CD4-positive, alpha-beta memory T cell (primary cell): ENCODE measurements at regions of chr7 and their contacts with region 1.

Region 1: GRCh38 chr7:139124084-139124914 is 14.8 kb upstream of the ZC3HAV1 start:
- DNase-seq: no peak
- H3K4me3 ChIP-seq: no peak overlapping the region
- H3K4me3 Mint-ChIP-seq: peak overlapping the region in 1 of 8 donors; percentile 40
- H3K27ac ChIP-seq: no peak overlapping the region
- H3K27ac Mint-ChIP-seq: no peak overlapping the region
- H3K4me1 ChIP-seq: peaks cover 12% of the 10 kb centered on the region
- H3K4me1 Mint-ChIP-seq: peaks cover 7 to 31% (median 12%) of the 10 kb centered on the region in 4 donors
- H3K27me3 ChIP-seq: no peaks in the 10 kb centered on the region
- H3K27me3 Mint-ChIP-seq: no peaks in the 10 kb centered on the region

Region 2: DNA sequence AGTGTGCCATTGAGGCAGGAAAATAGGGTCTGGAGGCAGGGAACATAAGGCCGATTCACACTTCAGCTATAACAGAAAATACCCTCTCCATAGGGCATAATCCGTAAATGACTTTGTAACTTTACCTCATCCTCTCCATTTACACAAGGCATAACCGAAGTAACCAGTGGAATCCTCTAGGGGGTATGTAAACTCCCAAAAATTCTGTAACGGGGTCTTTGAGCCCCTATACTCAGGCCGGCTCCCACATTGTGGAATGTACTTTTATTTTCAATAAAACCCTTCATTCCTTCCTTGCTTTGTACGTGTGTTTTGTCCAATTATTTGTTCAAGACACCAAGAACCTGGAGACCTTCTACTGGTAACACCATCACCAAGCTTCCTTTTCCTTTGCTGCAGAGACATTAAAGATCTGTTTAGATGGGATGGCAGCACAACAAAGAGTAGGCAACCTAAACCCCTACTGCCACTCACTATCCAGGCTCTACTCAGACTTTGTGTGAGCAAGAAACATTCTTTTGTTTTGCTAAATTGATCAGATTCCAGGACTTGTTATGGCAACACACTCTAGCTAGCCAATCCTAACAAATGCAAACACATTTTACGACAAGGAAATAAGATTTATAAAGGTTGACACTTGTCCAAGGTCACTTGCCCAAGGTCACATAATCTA is 1376.8 kb before region 1 on chr7:
- CTCF ChIA-PET with region 1: no interaction called
- POLR2A ChIA-PET with region 1: no interaction called
- intact Hi-C with region 1: no loop called
- DNase-seq: no peak
- H3K4me3 ChIP-seq: no peak overlapping the region
- H3K4me3 Mint-ChIP-seq: no peak overlapping the region
- H3K27ac ChIP-seq: no peak overlapping the region
- H3K27ac Mint-ChIP-seq: no peak overlapping the region
- H3K4me1 ChIP-seq: no peaks in the 10 kb centered on the region
- H3K4me1 Mint-ChIP-seq: no peaks in the 10 kb centered on the region
- H3K27me3 ChIP-seq: no peaks in the 10 kb centered on the region
- H3K27me3 Mint-ChIP-seq: peaks cover 2 to 17% of the 10 kb centered on the region in 2 donors

Region 3: GRCh38 chr7:139080905-139081304 is 43.4 kb before region 1 on chr7:
- CTCF ChIA-PET with region 1: interaction called, 26 read pairs
- POLR2A ChIA-PET with region 1: interaction called, 3 read pairs
- intact Hi-C with region 1: no loop called
- DNase-seq: no peak
- H3K4me3 ChIP-seq: no peak overlapping the region
- H3K4me3 Mint-ChIP-seq: peak overlapping the region; percentile 5 to 88 (median 68)
- H3K27ac ChIP-seq: peak overlapping the region; percentile 30
- H3K27ac Mint-ChIP-seq: peak overlapping the region; percentile 79 to 94 (median 88)
- H3K4me1 ChIP-seq: peaks cover 83% of the 10 kb centered on the region
- H3K4me1 Mint-ChIP-seq: peaks cover 62 to 97% (median 84%) of the 10 kb centered on the region in 4 donors
- H3K27me3 ChIP-seq: no peaks in the 10 kb centered on the region
- H3K27me3 Mint-ChIP-seq: no peaks in the 10 kb centered on the region